HCT116 (cell line): ENCODE measurements at regions of chr2 and their contacts with region 1.

Region 1: DNA sequence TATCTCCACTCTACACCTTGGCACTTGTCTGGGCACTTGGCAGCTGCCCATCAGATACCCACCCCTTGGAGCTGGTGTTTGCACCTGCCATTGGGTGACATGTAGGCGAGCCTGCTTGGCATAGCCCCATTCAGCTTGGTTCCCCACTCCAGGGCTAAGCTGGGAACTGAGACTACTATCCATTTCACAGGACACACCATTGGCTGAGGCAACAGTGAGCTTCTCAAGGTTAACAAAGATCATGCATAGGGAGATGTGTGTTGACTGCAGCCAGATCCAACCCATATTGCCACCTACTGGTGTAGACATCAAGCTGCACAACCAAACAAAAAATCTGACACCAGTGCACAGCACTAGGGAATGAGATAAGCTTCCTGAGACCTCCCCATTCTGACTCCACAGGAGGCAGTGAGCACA is 1389.8 kb upstream of the TMEFF2 start:
- DNase-seq: peak; percentile 15
- ATAC-seq: peak; percentile 88
- H3K4me3 ChIP-seq: no peak overlapping the region
- H3K27ac ChIP-seq: no peak overlapping the region
- H3K4me1 ChIP-seq: no peaks in the 10 kb centered on the region
- H3K27me3 ChIP-seq: no peaks in the 10 kb centered on the region
- CTCF ChIP-seq: peak; percentile 20 to 57 (median 52); a peak in 4 of 6 replicates
- POLR2A ChIP-seq: no peak
- RAD21 ChIP-seq: peak; percentile 57

Region 2: DNA sequence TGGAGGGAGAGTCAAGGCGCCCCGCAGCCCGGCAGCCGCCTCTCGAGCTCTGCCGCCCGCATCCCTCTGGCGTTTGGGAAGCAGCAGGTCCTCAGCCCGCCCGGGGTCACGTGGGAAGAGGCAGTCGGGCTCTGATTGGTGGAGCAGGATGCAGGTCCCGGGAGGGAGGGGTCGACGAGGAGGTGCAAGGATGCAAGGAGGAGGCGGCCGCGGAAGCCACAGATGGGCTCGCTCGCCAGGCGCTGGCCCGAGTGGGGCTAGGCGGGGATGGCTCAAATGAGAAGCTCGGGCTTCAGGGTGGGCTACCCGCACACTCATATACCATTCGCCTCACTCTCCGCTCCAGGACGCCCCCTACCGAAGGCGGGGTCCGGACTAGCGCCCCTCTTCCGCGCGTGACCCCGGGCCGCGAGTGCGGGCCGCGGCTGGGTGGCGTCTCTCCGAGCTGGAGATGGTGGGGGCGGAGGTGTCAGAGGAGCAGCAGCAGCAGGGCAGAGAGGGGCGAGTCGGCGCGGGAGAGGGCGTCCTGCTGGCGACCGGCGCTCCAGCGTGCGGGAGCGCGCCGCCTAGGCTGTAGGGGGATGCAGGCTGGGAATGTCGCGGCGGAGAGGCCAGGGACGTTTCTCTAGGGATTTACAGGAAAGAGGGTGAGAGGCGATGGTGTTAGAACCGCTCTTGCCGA is 1389.5 kb before region 1 on chr2 and contains the start of gene TMEFF2:
- CTCF ChIA-PET with region 1: no interaction called
- POLR2A ChIA-PET with region 1: no interaction called
- RAD21 ChIA-PET with region 1: no interaction called
- intact Hi-C with region 1: loop called (anchors 5 kb)
- DNase-seq: no peak
- ATAC-seq: no peak
- H3K4me3 ChIP-seq: peak within 1 kb of the TSS; percentile 43 to 48
- H3K27ac ChIP-seq: no peak within 1 kb of the TSS
- H3K4me1 ChIP-seq: no peaks in the 10 kb centered on the region
- H3K27me3 ChIP-seq: no peaks in the 10 kb centered on the region
- CTCF ChIP-seq: no peak
- POLR2A ChIP-seq: no peak
- RAD21 ChIP-seq: no peak
- total RNA-seq, gene TMEFF2: not detected

Region 3: GRCh38 chr2:192741889-192742288 is 842.6 kb before region 1 on chr2:
- CTCF ChIA-PET with region 1: no interaction called
- POLR2A ChIA-PET with region 1: no interaction called
- RAD21 ChIA-PET with region 1: no interaction called
- intact Hi-C with region 1: loop called (anchors 5 kb)
- DNase-seq: peak; percentile 3
- ATAC-seq: peak; percentile 62
- H3K4me3 ChIP-seq: no peak overlapping the region
- H3K27ac ChIP-seq: no peak overlapping the region
- H3K4me1 ChIP-seq: no peaks in the 10 kb centered on the region
- H3K27me3 ChIP-seq: no peaks in the 10 kb centered on the region
- CTCF ChIP-seq: peak; percentile 25 to 56 (median 46); a peak in 5 of 6 replicates
- POLR2A ChIP-seq: no peak
- RAD21 ChIP-seq: peak; percentile 51

Region 4: DNA sequence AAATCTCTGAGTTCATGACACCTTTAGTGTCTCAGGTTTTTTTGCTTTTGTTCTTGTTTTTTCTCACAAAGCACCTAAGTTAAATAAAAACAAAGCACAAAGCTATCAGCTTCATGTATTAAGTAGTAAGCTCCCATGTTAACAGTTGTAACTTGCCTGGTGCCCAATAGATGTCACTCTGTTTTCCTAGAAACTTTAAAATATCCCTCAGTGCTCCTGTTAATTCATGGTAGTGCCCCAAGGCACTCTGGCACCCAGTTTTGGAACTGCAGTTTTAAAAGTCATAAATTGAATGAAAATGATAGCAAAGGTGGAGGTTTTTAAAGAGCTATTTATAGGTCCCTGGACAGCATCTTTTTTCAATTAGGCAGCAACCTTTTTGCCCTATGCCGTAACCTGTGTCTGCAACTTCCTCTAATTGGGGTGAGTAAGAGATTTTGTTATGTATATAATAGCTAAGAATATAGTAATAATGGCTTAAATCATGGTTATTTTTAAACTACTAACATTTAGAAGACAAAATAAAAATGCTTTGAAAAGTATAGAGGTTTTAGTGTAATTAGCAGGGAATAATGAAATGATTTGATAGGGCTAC is 834.8 kb before region 1 on chr2:
- CTCF ChIA-PET with region 1: interaction called, 15 read pairs
- POLR2A ChIA-PET with region 1: no interaction called
- RAD21 ChIA-PET with region 1: no interaction called
- intact Hi-C with region 1: loop called (anchors 5 kb)
- DNase-seq: peak; percentile 31
- ATAC-seq: peak; percentile 95
- H3K4me3 ChIP-seq: no peak overlapping the region
- H3K27ac ChIP-seq: no peak overlapping the region
- H3K4me1 ChIP-seq: no peaks in the 10 kb centered on the region
- H3K27me3 ChIP-seq: no peaks in the 10 kb centered on the region
- CTCF ChIP-seq: peak; percentile 31 to 58 (median 47); a peak in 5 of 6 replicates
- POLR2A ChIP-seq: no peak
- RAD21 ChIP-seq: peak; percentile 57

Region 5: DNA sequence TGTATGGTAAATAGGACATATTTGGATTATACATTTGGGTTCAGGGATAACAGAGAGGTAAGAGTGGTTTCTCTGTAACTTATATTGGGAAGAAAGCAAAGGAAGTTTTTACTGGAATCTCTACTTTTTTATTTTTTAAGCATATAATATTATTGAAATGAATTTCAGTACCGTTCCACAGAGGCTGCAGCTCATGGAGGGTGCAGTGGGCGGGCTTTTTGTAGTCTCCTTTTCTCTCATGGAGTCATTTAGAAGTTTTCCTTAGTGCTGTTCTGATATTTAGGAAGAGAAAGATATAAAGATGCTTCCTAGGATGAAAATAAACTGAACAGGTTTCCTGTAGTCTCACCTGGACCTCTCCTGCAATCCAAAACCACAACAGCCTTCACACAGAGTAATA is 236.5 kb before region 1 on chr2:
- CTCF ChIA-PET with region 1: no interaction called
- POLR2A ChIA-PET with region 1: no interaction called
- RAD21 ChIA-PET with region 1: no interaction called
- intact Hi-C with region 1: no loop called
- DNase-seq: no peak
- ATAC-seq: no peak
- H3K4me3 ChIP-seq: no peak overlapping the region
- H3K27ac ChIP-seq: no peak overlapping the region
- H3K4me1 ChIP-seq: no peaks in the 10 kb centered on the region
- H3K27me3 ChIP-seq: no peaks in the 10 kb centered on the region
- CTCF ChIP-seq: no peak
- POLR2A ChIP-seq: no peak
- RAD21 ChIP-seq: no peak

Region 6: GRCh38 chr2:193963472-193964119 is 379.1 kb after region 1 on chr2:
- CTCF ChIA-PET with region 1: interaction called, 11 read pairs
- POLR2A ChIA-PET with region 1: no interaction called
- RAD21 ChIA-PET with region 1: no interaction called
- intact Hi-C with region 1: no loop called
- DNase-seq: peak; percentile 36
- ATAC-seq: peak; percentile 84
- H3K4me3 ChIP-seq: no peak overlapping the region
- H3K27ac ChIP-seq: no peak overlapping the region
- H3K4me1 ChIP-seq: no peaks in the 10 kb centered on the region; a peak in 1 of 4 replicates
- H3K27me3 ChIP-seq: no peaks in the 10 kb centered on the region
- CTCF ChIP-seq: peak; percentile 61 to 77 (median 67)
- POLR2A ChIP-seq: no peak
- RAD21 ChIP-seq: peak; percentile 80